HCT116 (cell line): ENCODE measurements at regions of chr5 and their contacts with region 1.

Region 1: DNA sequence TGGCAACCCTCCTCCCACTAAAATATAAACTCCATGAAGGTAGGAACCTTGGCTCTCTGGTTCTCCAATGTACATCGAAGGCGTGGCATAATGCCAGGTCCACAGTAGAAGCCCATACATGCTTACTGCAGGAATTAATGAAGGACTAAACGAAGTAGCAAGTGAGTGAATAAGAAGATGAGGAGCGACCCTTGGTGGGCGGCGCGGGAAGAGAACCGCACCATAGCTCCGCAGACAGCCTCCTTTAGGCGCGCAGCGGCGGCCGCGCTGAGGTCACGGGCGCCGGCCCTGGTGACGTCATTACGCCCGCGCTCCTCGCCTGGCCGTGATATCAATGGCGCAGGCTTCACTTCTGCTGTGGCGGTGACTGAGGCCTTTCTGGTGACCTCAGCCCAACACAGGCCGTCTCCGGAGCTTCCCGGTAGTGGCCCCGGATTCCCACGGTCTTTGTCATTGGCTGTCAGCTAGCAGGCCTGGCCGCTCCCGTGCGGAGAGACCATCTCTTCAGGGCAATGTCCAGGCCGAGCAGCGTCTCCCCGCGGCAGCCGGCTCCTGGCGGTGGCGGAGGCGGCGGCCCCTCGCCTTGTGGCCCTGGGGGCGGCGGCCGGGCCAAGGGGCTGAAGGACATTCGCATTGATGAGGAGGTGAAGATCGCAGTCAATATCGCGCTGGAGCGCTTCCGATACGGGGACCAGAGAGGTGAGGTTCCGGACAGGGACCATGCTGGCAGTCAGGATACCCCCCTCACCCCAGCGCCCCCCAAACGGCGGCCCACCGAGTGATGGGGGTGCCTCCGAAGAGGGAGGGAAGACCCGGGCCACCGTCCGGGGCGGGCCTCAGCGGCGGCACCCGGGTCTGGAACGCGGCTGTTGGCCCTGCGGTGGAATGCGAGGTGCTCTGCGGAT is at the start of gene YTHDC2:
- DNase-seq: peak; percentile 73
- ATAC-seq: peak; percentile 98
- H3K4me3 ChIP-seq: peak within 1 kb of the TSS; percentile 68 to 84
- H3K27ac ChIP-seq: peak within 1 kb of the TSS; percentile 68
- H3K4me1 ChIP-seq: peaks cover 0 to 15% of the 10 kb centered on the region in 2 experiments; a peak in 2 of 4 replicates
- H3K27me3 ChIP-seq: no peaks in the 10 kb centered on the region
- CTCF ChIP-seq: peak in 2 of 3 experiments; percentile 11 to 22; a peak in 2 of 6 replicates
- POLR2A ChIP-seq: peak; percentile 87
- RAD21 ChIP-seq: peak; percentile 51
- total RNA-seq, gene YTHDC2: 22.2 TPM

Region 2: GRCh38 chr5:113043491-113043931 is 470.1 kb before region 1 on chr5:
- CTCF ChIA-PET with region 1: no interaction called
- POLR2A ChIA-PET with region 1: no interaction called
- RAD21 ChIA-PET with region 1: no interaction called
- intact Hi-C with region 1: loop called (anchors 2 kb)
- DNase-seq: no peak
- ATAC-seq: peak; percentile 38; the same call in 1 of the 2 replicates
- H3K4me3 ChIP-seq: no peak overlapping the region
- H3K27ac ChIP-seq: no peak overlapping the region
- H3K4me1 ChIP-seq: peaks cover 6 to 24% of the 10 kb centered on the region in 2 experiments; a peak in 3 of 4 replicates
- H3K27me3 ChIP-seq: no peaks in the 10 kb centered on the region
- CTCF ChIP-seq: peak; percentile 19 to 40 (median 26); a peak in 3 of 6 replicates
- POLR2A ChIP-seq: no peak
- RAD21 ChIP-seq: peak; percentile 78

Region 3: DNA sequence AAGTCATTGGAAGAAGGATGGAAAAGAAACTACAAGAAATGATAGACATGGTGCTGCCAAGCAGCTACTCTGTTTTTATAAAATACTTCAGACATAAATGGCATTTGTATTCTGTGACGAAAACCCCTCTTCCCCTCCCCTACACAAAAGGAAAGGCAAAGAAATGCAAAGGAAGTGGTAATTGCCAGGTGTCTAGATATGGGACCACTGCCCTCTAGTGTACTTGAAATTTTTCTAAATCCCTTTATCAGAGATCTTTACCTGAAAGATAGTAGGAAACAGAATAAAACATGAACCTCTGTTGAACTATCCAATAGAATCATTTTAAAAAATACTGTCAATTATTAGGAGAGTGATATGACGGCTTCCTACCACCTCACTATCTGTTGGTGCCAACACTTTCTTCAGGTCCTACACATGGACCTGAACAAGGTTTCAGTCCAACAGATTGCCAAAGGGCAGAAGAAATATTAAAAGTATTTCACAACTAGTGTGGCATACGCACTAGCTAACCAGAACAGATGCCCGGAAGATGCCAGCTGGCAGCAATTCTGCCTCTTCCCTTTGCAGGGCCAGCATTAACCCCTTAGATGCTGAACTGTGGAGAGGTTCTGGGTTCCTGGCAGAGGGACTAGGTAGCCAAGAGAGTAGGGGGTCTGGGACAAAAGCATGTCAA is 183.0 kb before region 1 on chr5:
- CTCF ChIA-PET with region 1: interaction called, 13 read pairs
- POLR2A ChIA-PET with region 1: interaction called, 4 read pairs
- RAD21 ChIA-PET with region 1: interaction called in 1 of 2 experiments, 3 read pairs
- intact Hi-C with region 1: no loop called
- DNase-seq: peak; percentile 54
- ATAC-seq: peak; percentile 86
- H3K4me3 ChIP-seq: no peak overlapping the region
- H3K27ac ChIP-seq: no peak overlapping the region
- H3K4me1 ChIP-seq: peaks cover 0 to 11% of the 10 kb centered on the region in 2 experiments; a peak in 2 of 4 replicates
- H3K27me3 ChIP-seq: no peaks in the 10 kb centered on the region
- CTCF ChIP-seq: peak; percentile 50 to 88 (median 76); a peak in 5 of 6 replicates
- POLR2A ChIP-seq: no peak
- RAD21 ChIP-seq: peak; percentile 95

Region 4: DNA sequence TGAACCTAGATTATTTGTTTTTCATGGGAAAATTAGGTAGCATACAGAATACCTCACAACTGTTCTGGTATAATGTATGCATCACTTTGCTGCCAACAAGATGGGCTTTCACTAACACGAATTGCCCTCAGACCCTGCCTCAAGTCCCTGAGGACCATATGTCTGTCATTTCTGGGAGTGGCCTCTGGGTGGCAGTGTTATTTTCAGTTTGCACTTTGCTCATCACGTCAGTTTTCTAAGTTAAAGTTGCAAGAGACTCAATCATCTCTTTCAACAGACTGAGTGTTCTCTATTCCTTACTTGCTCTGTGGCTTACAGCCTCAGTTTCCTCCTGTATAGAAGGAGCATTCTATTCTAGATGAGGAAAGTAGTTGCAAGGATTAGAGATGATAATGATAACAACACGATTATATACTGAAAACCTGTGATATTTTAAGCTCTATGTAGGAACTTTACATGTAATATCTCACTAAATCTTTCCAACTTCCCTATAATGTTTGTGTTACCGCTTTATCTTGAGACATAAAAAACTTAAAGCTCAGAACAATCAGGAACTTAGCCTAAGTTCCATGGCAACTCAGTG is 134.6 kb before region 1 on chr5:
- CTCF ChIA-PET with region 1: interaction called, 12 read pairs
- POLR2A ChIA-PET with region 1: no interaction called
- RAD21 ChIA-PET with region 1: interaction called, 5 to 7 read pairs
- intact Hi-C with region 1: loop called (anchors 1 kb)
- DNase-seq: peak; percentile 50
- ATAC-seq: peak; percentile 81
- H3K4me3 ChIP-seq: no peak overlapping the region
- H3K27ac ChIP-seq: no peak overlapping the region
- H3K4me1 ChIP-seq: no peaks in the 10 kb centered on the region
- H3K27me3 ChIP-seq: no peaks in the 10 kb centered on the region
- CTCF ChIP-seq: peak; percentile 63 to 80 (median 75)
- POLR2A ChIP-seq: no peak
- RAD21 ChIP-seq: peak; percentile 80